MCF 10A (cell line): ENCODE measurements at regions of chr1 and their contacts with region 1.

Region 1: GRCh38 chr1:3423245-3423829 is 31.1 kb upstream of the ARHGEF16 start:
- DNase-seq: no peak
- H3K4me3 Mint-ChIP-seq: no peak overlapping the region
- H3K27ac Mint-ChIP-seq: no peak overlapping the region
- H3K4me1 Mint-ChIP-seq: no peaks in the 10 kb centered on the region
- H3K27me3 Mint-ChIP-seq: peaks cover 32% of the 10 kb centered on the region
- CTCF ChIP-seq: no peak

Region 2: GRCh38 chr1:2412519-2413233 is 1010.7 kb before region 1 on chr1 and contains the start of gene PEX10:
- CTCF ChIA-PET with region 1: interaction called, 8 read pairs
- POLR2A ChIA-PET with region 1: interaction called, 5 read pairs
- intact Hi-C with region 1: loop called (anchors 2 kb)
- DNase-seq: peak; percentile 94
- H3K4me3 Mint-ChIP-seq: peak within 1 kb of the TSS; percentile 75
- H3K27ac Mint-ChIP-seq: peak within 1 kb of the TSS; percentile 87
- H3K4me1 Mint-ChIP-seq: peaks cover 8% of the 10 kb centered on the region
- H3K27me3 Mint-ChIP-seq: no peaks in the 10 kb centered on the region
- CTCF ChIP-seq: no peak
- total RNA-seq, gene PEX10: 31.3 and 36.1 TPM in 2 replicates

Region 3: GRCh38 chr1:2914702-2915101 is 508.6 kb before region 1 on chr1:
- CTCF ChIA-PET with region 1: no interaction called
- POLR2A ChIA-PET with region 1: no interaction called
- intact Hi-C with region 1: no loop called
- DNase-seq: no peak
- H3K4me3 Mint-ChIP-seq: no peak overlapping the region
- H3K27ac Mint-ChIP-seq: no peak overlapping the region
- H3K4me1 Mint-ChIP-seq: no peaks in the 10 kb centered on the region
- H3K27me3 Mint-ChIP-seq: no peaks in the 10 kb centered on the region
- CTCF ChIP-seq: no peak

Region 4: GRCh38 chr1:3441410-3441847 is 18.1 kb after region 1 on chr1:
- CTCF ChIA-PET with region 1: interaction called, 11 read pairs
- POLR2A ChIA-PET with region 1: no interaction called
- intact Hi-C with region 1: no loop called
- DNase-seq: no peak
- H3K4me3 Mint-ChIP-seq: no peak overlapping the region
- H3K27ac Mint-ChIP-seq: no peak overlapping the region
- H3K4me1 Mint-ChIP-seq: no peaks in the 10 kb centered on the region
- H3K27me3 Mint-ChIP-seq: peaks cover 40% of the 10 kb centered on the region
- CTCF ChIP-seq: no peak